AG04449 (cell line): ENCODE measurements at regions of chr3 and their contacts with region 1.

Region 1: GRCh38 chr3:120417272-120417911 is 33.4 kb downstream of the FSTL1 start:
- DNase-seq: peak; percentile 94
- H3K4me3 ChIP-seq: 0 out of 2 replicates have a peak overlapping the region, but pooled peaks have one; percentile 28
- CTCF ChIP-seq: peak; percentile 70

Region 2: GRCh38 chr3:120160050-120160449 is 257.3 kb before region 1 on chr3:
- CTCF ChIA-PET with region 1: no interaction called
- POLR2A ChIA-PET with region 1: no interaction called
- DNase-seq: peak; percentile 99
- H3K4me3 ChIP-seq: no peak overlapping the region
- CTCF ChIP-seq: no peak

Region 3: GRCh38 chr3:120245386-120245785 is 172.0 kb before region 1 on chr3:
- CTCF ChIA-PET with region 1: interaction called, 51 read pairs
- POLR2A ChIA-PET with region 1: no interaction called
- DNase-seq: no peak
- H3K4me3 ChIP-seq: no peak overlapping the region
- CTCF ChIP-seq: no peak

Region 4: DNA sequence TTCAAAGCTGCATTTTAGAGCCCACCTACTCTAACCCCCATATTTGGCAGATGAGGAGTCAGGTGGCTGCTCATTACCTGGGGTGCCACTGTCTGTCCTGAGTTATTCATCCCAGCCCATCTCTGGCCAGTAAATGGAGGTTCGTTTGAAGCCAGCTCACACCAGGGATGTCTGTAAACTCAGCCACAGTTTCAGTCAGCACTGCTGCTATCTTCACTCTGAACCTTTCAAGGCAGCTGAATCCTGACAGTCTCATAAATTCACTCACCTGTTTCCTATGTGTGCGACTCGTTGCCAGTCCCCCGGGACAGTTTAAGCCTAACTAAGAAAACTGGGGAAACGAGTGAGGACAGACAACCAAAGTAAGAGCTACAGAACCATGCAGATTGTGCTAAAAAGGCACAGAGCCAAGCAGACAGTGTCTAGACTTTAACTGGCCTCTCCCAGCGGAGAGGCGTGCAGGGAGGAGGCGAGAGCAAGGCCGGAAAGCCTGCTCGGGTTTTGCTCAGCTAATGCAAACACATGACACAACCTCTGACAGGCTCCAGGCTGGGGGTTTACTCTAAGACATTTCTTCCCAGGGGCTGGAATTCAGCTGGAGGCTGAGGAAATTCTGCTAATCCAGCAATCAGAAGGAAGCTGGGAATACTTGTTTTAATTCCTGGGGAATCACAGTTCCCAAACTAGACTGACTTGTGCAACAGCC is 21.4 kb after region 1 on chr3:
- CTCF ChIA-PET with region 1: interaction called, 42 read pairs
- POLR2A ChIA-PET with region 1: interaction called, 9 read pairs
- DNase-seq: no peak
- H3K4me3 ChIP-seq: no peak overlapping the region
- CTCF ChIP-seq: no peak

Region 5: DNA sequence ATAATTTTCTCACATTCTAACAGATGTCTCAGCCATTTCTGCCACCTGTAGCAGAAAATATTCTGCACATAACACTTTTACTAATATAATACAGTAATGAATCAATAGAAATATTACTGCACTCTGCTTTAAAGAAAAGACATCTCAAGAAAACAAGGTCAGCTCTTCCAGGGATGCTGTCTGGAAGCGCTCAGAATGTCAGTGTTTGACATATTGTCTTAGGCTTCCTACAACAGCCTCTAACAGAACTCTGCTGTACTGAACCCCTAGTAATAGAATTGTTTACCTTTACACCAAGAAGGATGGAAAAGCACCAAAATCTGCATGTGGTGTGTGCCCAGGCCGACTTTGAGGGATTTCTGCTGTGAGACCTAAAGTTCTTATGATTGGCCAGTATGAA is 95.3 kb after region 1 on chr3:
- CTCF ChIA-PET with region 1: interaction called, 23 read pairs
- POLR2A ChIA-PET with region 1: no interaction called
- DNase-seq: no peak
- H3K4me3 ChIP-seq: no peak overlapping the region
- CTCF ChIP-seq: no peak

Region 6: GRCh38 chr3:120567370-120568201 is 150.2 kb after region 1 on chr3:
- CTCF ChIA-PET with region 1: interaction called, 13 read pairs
- POLR2A ChIA-PET with region 1: no interaction called
- DNase-seq: no peak
- H3K4me3 ChIP-seq: no peak overlapping the region
- CTCF ChIP-seq: peak; percentile 42

Region 7: GRCh38 chr3:120652896-120653545 is 235.6 kb after region 1 on chr3:
- CTCF ChIA-PET with region 1: no interaction called
- POLR2A ChIA-PET with region 1: no interaction called
- DNase-seq: no peak
- H3K4me3 ChIP-seq: no peak overlapping the region
- CTCF ChIP-seq: no peak